ENCODE measurements at regions of chr14 and their contacts with region 1.

Region 1: DNA sequence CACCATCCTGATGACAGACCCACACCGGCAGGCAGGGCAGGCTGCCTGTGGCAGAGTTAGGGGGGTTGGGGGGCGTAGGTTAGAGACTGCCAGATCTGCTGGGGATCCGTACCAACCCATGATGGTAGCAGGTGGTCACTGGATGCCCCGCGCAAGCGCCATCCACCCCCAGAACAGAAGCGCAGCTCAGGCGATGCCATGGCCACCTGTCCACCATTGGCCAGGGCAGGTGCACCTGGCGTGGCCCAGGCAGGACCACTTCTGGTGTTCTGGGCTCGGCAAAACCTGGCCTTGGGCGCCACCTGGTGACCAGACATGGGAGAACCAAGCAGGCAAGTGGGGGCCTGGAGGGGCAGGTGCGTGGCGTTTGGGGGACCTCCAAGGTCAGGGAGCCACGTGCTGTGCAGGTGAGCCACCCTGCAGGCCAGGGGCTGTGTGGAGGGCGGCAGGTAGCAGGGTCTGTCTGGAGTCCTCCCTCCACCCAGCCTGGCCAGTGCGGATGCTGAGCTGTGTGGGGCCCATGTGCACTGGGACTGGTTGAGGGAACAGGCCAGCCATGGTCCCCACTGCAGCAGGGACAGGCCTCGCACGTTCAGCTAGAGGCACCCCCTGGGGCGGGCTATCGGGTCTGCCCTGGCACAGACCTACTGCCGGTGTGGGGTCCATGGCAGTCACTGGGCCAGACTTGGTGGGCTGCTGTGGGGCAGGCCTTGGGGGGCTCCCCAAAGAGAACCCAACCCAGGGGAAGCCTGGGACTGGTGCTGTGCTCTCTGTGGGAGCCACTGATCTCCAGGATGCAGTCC is 15.6 kb downstream of the BAG5 start:
- DNase-seq: peak in 1 of 2 experiments; percentile 98
- H3K4me3 ChIP-seq: no peak overlapping the region
- H3K27ac ChIP-seq: no peak overlapping the region
- H3K4me1 ChIP-seq: peaks cover 0 to 26% (median 22%) of the 10 kb centered on the region in 4 experiments; a peak in 6 of 7 replicates
- H3K27me3 ChIP-seq: no peaks in the 10 kb centered on the region
- CTCF ChIP-seq: peak in 2 of 3 experiments; percentile 98; a peak in 3 of 4 replicates
- EP300 ChIP-seq: no peak
- POLR2A ChIP-seq: no peak
- RAD21 ChIP-seq: peak; percentile 100

Region 2: GRCh38 chr14:103512701-103513611 is 33.9 kb before region 1 on chr14:
- CTCF ChIA-PET with region 1: interaction called, 921 read pairs
- POLR2A ChIA-PET with region 1: interaction called, 844 read pairs
- DNase-seq: no peak
- H3K4me3 ChIP-seq: no peak overlapping the region
- H3K27ac ChIP-seq: no peak overlapping the region
- H3K4me1 ChIP-seq: peaks cover 0 to 3% (median 2%) of the 10 kb centered on the region in 4 experiments; a peak in 3 of 7 replicates
- H3K27me3 ChIP-seq: no peaks in the 10 kb centered on the region
- CTCF ChIP-seq: peak in 1 of 3 experiments; percentile 3; a peak in 1 of 4 replicates
- EP300 ChIP-seq: no peak
- POLR2A ChIP-seq: no peak; a peak in 1 of 3 replicates
- RAD21 ChIP-seq: peak; percentile 3 to 7; a peak in 1 of 4 replicates

Region 3: DNA sequence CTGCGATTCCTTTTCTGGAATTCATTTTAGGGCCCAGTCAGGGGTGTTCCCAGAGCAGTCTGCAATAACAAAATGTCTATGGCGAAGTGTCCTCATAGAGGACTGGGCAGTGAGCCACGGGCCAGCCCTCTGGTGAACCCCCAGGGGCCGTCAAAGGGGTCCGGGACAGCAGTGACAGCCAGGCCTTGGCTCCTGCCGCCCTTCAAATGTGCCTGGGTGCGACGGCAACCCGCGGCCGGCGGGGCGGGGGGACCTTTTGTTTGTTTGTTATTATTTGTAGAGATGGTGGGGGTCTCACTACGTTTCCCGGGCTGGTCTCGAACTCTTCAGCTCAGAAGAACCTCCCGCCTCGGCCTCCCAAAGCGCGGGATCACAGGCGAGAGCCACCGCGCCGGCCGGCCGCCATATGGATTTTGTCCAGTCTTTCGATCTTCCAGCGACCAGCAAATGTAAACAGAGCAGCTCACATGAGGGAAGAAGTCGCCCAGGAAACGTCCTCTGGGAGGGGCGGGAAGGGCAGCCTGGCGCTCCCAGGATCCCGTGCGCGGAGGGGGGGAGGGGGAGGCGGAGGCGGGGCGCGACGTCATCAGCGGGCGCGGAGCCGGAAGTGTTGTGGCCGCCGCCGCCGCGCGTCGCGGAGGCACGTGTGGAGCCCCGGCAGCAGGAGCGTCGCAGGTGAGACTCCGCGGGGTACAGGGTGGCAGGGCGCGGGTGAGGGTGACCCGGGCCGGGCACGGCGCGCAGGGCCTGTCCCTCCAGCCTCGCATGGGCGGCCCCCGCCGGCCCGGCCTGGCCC is 18.1 kb before region 1 on chr14 and contains the start of gene TRMT61A:
- CTCF ChIA-PET with region 1: interaction called, 921 read pairs
- POLR2A ChIA-PET with region 1: interaction called, 844 read pairs
- DNase-seq: peak in 1 of 2 experiments; percentile 83
- H3K4me3 ChIP-seq: peak within 1 kb of the TSS; percentile 61 to 97 (median 94)
- H3K27ac ChIP-seq: peak within 1 kb of the TSS; percentile 71; the same call in 1 of the 2 replicates
- H3K4me1 ChIP-seq: peaks cover 0 to 12% (median 10%) of the 10 kb centered on the region in 4 experiments; a peak in 6 of 7 replicates
- H3K27me3 ChIP-seq: peaks cover 2 to 16% (median 7%) of the 10 kb centered on the region in 4 experiments
- CTCF ChIP-seq: no peak
- EP300 ChIP-seq: no peak
- POLR2A ChIP-seq: peak in 1 of 2 experiments; percentile 59; a peak in 1 of 3 replicates
- RAD21 ChIP-seq: no peak
- total RNA-seq, gene TRMT61A: 15.1 and 15.8 TPM in 2 replicates